ENCODE measurements at regions of chr4 and their contacts with region 1.

Region 1: GRCh38 chr4:67393699-67394281 is 151.5 kb downstream of the CENPC start:
- DNase-seq: peak; percentile 27
- H3K4me3 Mint-ChIP-seq: no peak overlapping the region
- H3K27ac Mint-ChIP-seq: no peak overlapping the region
- H3K4me1 Mint-ChIP-seq: no peaks in the 10 kb centered on the region
- H3K27me3 Mint-ChIP-seq: peaks cover 14% of the 10 kb centered on the region
- CTCF ChIP-seq: peak; percentile 25

Region 2: DNA sequence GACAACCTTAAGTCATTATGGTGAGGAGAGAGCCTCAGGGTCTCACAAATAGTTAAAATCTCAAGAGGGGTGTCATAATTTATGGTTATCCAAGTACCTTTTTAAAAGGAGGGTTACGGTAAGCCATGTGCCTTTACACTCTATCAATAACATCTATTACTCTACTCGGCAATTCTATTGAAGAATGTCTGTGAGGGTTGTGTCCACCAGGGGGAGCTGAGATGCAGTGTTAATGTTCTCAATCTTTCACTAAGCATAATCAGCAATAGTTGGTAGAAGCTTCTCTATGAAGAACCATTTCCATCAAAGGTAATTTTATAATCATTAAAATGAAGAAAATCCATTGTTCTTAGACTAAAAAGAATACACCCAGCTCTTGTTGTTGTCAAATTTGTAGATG is 305.9 kb before region 1 on chr4:
- CTCF ChIA-PET with region 1: no interaction called
- intact Hi-C with region 1: loop called (anchors 10 kb)
- DNase-seq: peak; percentile 42
- H3K4me3 Mint-ChIP-seq: no peak overlapping the region
- H3K27ac Mint-ChIP-seq: no peak overlapping the region
- H3K4me1 Mint-ChIP-seq: no peaks in the 10 kb centered on the region
- H3K27me3 Mint-ChIP-seq: no peaks in the 10 kb centered on the region
- CTCF ChIP-seq: peak; percentile 14